IMR-90 (cell line): ENCODE measurements at regions of chr2 and their contacts with region 1.

Region 1: GRCh38 chr2:48600204-48600813 is 17.3 kb upstream of the GTF2A1L start:
- DNase-seq: peak; percentile 67
- ATAC-seq: peak; percentile 86
- H3K4me3 ChIP-seq: no peak overlapping the region
- H3K27ac ChIP-seq: peak overlapping the region; percentile 66
- H3K4me1 ChIP-seq: peaks cover 7% of the 10 kb centered on the region
- H3K27me3 ChIP-seq: no peaks in the 10 kb centered on the region
- CTCF ChIP-seq: peak; percentile 85
- POLR2A ChIP-seq: no peak
- RAD21 ChIP-seq: peak; percentile 94

Region 2: GRCh38 chr2:47165001-47165555 is 1435.2 kb before region 1 on chr2:
- CTCF ChIA-PET with region 1: no interaction called
- POLR2A ChIA-PET with region 1: interaction called, 11 read pairs
- dilution Hi-C with region 1: no loop called
- in situ Hi-C with region 1: no loop called
- intact Hi-C with region 1: no loop called
- DNase-seq: peak; percentile 65
- ATAC-seq: peak; percentile 13; the same call in 1 of the 2 replicates
- H3K4me3 ChIP-seq: no peak overlapping the region
- H3K27ac ChIP-seq: no peak overlapping the region
- H3K4me1 ChIP-seq: peaks cover 7% of the 10 kb centered on the region
- H3K27me3 ChIP-seq: no peaks in the 10 kb centered on the region
- CTCF ChIP-seq: no peak
- POLR2A ChIP-seq: no peak
- RAD21 ChIP-seq: no peak

Region 3: GRCh38 chr2:48715042-48715899 is 115.0 kb after region 1 on chr2:
- CTCF ChIA-PET with region 1: interaction called, 4 read pairs
- POLR2A ChIA-PET with region 1: no interaction called
- dilution Hi-C with region 1: no loop called
- in situ Hi-C with region 1: no loop called
- intact Hi-C with region 1: loop called (anchors 2 kb)
- DNase-seq: peak; percentile 96
- ATAC-seq: peak; percentile 33
- H3K4me3 ChIP-seq: no peak overlapping the region
- H3K27ac ChIP-seq: peak overlapping the region; percentile 94
- H3K4me1 ChIP-seq: peaks cover 26% of the 10 kb centered on the region
- H3K27me3 ChIP-seq: no peaks in the 10 kb centered on the region
- CTCF ChIP-seq: no peak
- POLR2A ChIP-seq: no peak
- RAD21 ChIP-seq: no peak

Region 4: GRCh38 chr2:48849770-48850169 is 249.5 kb after region 1 on chr2:
- CTCF ChIA-PET with region 1: no interaction called
- POLR2A ChIA-PET with region 1: no interaction called
- dilution Hi-C with region 1: no loop called
- in situ Hi-C with region 1: no loop called
- intact Hi-C with region 1: loop called (anchors 2 kb)
- DNase-seq: peak; percentile 92
- ATAC-seq: peak; percentile 56
- H3K4me3 ChIP-seq: no peak overlapping the region
- H3K27ac ChIP-seq: peak overlapping the region; percentile 88
- H3K4me1 ChIP-seq: peaks cover 34% of the 10 kb centered on the region
- H3K27me3 ChIP-seq: no peaks in the 10 kb centered on the region
- CTCF ChIP-seq: no peak
- POLR2A ChIP-seq: no peak
- RAD21 ChIP-seq: no peak

Region 5: DNA sequence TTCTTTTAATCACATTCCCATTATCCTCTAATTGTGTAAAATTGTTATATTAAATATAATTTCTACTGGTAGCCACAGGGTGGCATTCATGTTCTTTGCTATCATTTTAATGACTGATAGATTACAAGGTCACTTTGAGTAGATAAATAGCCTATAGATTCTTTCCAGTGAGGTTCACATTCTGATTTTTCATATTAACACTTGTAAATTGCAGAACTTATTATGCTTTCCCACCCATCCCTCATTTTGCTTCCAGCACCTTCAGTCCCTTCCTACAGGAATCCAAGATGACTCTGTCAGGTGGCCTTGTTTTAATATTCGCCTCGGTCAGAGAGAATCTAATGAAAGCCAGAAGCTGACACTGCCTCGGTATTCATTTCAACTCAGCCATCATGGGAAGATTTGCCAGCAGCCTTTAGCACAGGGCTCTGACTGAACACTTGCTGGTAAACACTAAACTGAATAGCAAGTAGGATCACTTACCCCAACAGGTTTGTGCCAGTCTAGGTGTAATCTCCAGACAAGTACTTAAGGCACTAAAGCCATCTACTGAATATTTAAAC is 655.2 kb after region 1 on chr2:
- CTCF ChIA-PET with region 1: no interaction called
- POLR2A ChIA-PET with region 1: no interaction called
- dilution Hi-C with region 1: no loop called
- in situ Hi-C with region 1: no loop called
- intact Hi-C with region 1: loop called (anchors 2 kb)
- DNase-seq: no peak
- ATAC-seq: no peak
- H3K4me3 ChIP-seq: no peak overlapping the region
- H3K27ac ChIP-seq: no peak overlapping the region
- H3K4me1 ChIP-seq: no peaks in the 10 kb centered on the region
- H3K27me3 ChIP-seq: no peaks in the 10 kb centered on the region
- CTCF ChIP-seq: peak; percentile 23; the same call in 1 of the 2 replicates
- POLR2A ChIP-seq: no peak
- RAD21 ChIP-seq: peak; percentile 24; the same call in 1 of the 2 replicates

Region 6: GRCh38 chr2:50143822-50144575 is 1543.7 kb after region 1 on chr2:
- CTCF ChIA-PET with region 1: no interaction called
- POLR2A ChIA-PET with region 1: no interaction called
- dilution Hi-C with region 1: no loop called
- in situ Hi-C with region 1: no loop called
- intact Hi-C with region 1: loop called (anchors 2 kb)
- DNase-seq: no peak
- ATAC-seq: peak; percentile 57
- H3K4me3 ChIP-seq: peak overlapping the region; percentile 36; the same call in 1 of the 2 replicates
- H3K27ac ChIP-seq: no peak overlapping the region
- H3K4me1 ChIP-seq: no peaks in the 10 kb centered on the region
- H3K27me3 ChIP-seq: no peaks in the 10 kb centered on the region
- CTCF ChIP-seq: peak; percentile 51
- POLR2A ChIP-seq: no peak
- RAD21 ChIP-seq: peak; percentile 46; the same call in 1 of the 2 replicates

Region 7: DNA sequence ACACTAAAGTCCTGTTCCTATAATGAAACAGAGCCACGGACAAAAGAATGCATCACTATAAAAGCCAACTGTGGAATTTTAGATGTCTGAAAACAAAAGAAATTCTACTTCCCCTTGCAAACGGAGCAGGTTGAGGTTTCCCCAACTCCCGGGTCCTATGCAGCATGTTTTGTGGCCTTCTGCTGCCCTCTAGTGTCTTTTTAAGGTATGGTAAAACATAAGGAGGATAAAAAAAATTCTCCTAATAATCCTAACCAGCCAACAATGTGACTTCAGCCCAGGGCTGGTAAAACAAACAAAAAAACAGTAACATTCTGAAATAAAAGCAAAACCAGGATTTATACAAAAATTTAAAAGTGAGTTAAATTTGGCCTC is 1892.2 kb after region 1 on chr2:
- CTCF ChIA-PET with region 1: no interaction called
- POLR2A ChIA-PET with region 1: no interaction called
- dilution Hi-C with region 1: no loop called
- in situ Hi-C with region 1: loop called (anchors 5 kb)
- intact Hi-C with region 1: loop called (anchors 5 kb)
- DNase-seq: peak; percentile 65
- ATAC-seq: peak; percentile 83
- H3K4me3 ChIP-seq: no peak overlapping the region
- H3K27ac ChIP-seq: no peak overlapping the region
- H3K4me1 ChIP-seq: no peaks in the 10 kb centered on the region
- H3K27me3 ChIP-seq: no peaks in the 10 kb centered on the region; the same call in 1 of the 2 replicates
- CTCF ChIP-seq: peak; percentile 81
- POLR2A ChIP-seq: no peak
- RAD21 ChIP-seq: peak; percentile 67